ENCODE measurements at regions of chr21 and their contacts with region 1.

Region 1: DNA sequence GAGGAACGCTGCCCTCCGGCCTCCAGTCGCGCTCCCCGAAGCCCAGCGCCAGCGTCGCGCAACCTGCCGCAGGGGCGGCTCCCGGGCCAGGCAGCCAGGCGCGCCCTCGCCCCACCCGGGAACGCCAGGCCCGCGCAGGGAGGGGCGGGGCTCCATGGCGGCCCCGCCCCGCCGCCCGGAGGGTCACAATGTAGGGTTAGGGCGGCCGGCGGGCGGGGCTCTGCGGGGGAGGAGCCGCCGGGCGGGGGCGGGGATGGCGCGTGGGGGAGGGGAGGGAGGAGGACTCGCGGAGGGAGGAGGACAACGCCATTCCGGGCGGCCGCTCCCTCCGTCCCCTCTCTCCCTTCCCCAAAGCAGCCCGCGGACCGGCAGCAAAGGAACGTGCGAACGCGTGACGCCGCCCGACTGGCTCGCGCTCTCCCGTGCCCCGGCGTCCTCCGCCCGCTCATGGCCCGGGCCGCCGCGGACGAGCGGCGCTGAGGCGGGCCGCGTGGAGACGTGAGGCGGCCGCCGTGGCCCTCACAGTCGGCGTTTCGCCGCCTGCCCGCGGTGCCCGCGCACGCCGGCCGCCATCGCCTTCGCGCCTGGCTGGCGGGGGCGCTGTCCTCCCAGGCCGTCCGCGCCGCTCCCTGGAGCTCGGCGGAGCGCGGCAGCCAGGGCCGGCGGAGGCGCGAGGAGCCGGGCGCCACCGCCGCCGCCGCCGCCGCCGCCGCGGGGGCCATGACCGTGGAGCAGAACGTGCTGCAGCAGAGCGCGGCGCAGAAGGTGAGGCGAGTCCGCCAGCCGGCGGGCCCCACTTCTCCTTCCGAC is at the start of gene USP25:
- DNase-seq: peak; percentile 79 to 94 (median 87)
- ATAC-seq: peak; percentile 79
- H3K4me3 ChIP-seq: peak within 1 kb of the TSS; percentile 59 to 68
- H3K4me3 Mint-ChIP-seq: peak within 1 kb of the TSS; percentile 95
- H3K27ac ChIP-seq: peak within 1 kb of the TSS; percentile 69 to 73
- H3K27ac Mint-ChIP-seq: peak within 1 kb of the TSS; percentile 94
- H3K4me1 ChIP-seq: peaks cover 37% of the 10 kb centered on the region
- H3K4me1 Mint-ChIP-seq: peaks cover 41% of the 10 kb centered on the region
- H3K27me3 ChIP-seq: no peaks in the 10 kb centered on the region
- H3K27me3 Mint-ChIP-seq: no peaks in the 10 kb centered on the region
- CTCF ChIP-seq: no peak
- total RNA-seq, gene USP25: 49.8 to 54.7 TPM

Region 2: GRCh38 chr21:14215971-14216641 is 1513.8 kb before region 1 on chr21 and contains the start of gene RBM11:
- CTCF ChIA-PET with region 1: no interaction called
- POLR2A ChIA-PET with region 1: no interaction called
- intact Hi-C with region 1: loop called (anchors 5 kb)
- DNase-seq: peak; percentile 43 to 87 (median 75)
- ATAC-seq: peak; percentile 97
- H3K4me3 ChIP-seq: peak within 1 kb of the TSS; percentile 71 to 89
- H3K4me3 Mint-ChIP-seq: peak within 1 kb of the TSS; percentile 88
- H3K27ac ChIP-seq: peak within 1 kb of the TSS; percentile 54 to 60
- H3K27ac Mint-ChIP-seq: peak within 1 kb of the TSS; percentile 71
- H3K4me1 ChIP-seq: peaks cover 6% of the 10 kb centered on the region
- H3K4me1 Mint-ChIP-seq: peaks cover 11% of the 10 kb centered on the region
- H3K27me3 ChIP-seq: no peaks in the 10 kb centered on the region
- H3K27me3 Mint-ChIP-seq: peaks cover 7% of the 10 kb centered on the region
- CTCF ChIP-seq: no peak
- total RNA-seq, gene RBM11: 12.6 to 15.7 TPM

Region 3: DNA sequence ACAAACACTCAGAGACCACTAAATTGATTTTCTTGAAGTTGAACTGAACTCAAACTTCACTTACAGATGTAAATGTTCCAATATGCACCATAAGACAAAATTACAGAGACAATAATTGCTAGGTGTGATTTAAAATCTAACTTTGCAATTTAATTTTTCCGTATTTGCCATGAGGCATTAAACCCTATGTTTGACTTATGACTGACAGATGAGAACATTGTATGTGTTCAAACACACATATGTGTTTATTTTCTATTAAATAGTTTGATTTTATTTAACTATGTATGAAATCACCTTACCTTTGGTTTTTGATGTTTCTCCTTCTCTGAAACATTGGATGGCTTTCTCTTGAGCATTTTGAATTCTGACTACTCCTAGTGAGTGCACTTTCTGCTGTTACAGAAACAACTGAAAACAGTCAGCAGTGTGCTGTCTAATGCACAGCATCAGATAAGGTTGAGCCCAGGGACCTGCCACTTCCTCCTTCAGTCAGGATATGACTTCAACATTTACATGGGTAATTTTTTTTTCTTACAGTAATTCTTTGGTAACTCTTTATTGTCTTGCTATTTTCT is 1183.9 kb before region 1 on chr21 and contains the start of gene SAMSN1:
- CTCF ChIA-PET with region 1: no interaction called
- POLR2A ChIA-PET with region 1: no interaction called
- intact Hi-C with region 1: loop called (anchors 5 kb)
- DNase-seq: peak; percentile 37 to 88 (median 67)
- ATAC-seq: peak; percentile 90
- H3K4me3 ChIP-seq: peak within 1 kb of the TSS; percentile 53 to 81
- H3K4me3 Mint-ChIP-seq: peak within 1 kb of the TSS; percentile 93
- H3K27ac ChIP-seq: peak within 1 kb of the TSS; percentile 65 to 70
- H3K27ac Mint-ChIP-seq: peak within 1 kb of the TSS; percentile 97
- H3K4me1 ChIP-seq: peaks cover 41% of the 10 kb centered on the region
- H3K4me1 Mint-ChIP-seq: peaks cover 60% of the 10 kb centered on the region
- H3K27me3 ChIP-seq: no peaks in the 10 kb centered on the region
- H3K27me3 Mint-ChIP-seq: no peaks in the 10 kb centered on the region
- CTCF ChIP-seq: no peak
- total RNA-seq, gene SAMSN1: 45.8 to 47.0 TPM

Region 4: DNA sequence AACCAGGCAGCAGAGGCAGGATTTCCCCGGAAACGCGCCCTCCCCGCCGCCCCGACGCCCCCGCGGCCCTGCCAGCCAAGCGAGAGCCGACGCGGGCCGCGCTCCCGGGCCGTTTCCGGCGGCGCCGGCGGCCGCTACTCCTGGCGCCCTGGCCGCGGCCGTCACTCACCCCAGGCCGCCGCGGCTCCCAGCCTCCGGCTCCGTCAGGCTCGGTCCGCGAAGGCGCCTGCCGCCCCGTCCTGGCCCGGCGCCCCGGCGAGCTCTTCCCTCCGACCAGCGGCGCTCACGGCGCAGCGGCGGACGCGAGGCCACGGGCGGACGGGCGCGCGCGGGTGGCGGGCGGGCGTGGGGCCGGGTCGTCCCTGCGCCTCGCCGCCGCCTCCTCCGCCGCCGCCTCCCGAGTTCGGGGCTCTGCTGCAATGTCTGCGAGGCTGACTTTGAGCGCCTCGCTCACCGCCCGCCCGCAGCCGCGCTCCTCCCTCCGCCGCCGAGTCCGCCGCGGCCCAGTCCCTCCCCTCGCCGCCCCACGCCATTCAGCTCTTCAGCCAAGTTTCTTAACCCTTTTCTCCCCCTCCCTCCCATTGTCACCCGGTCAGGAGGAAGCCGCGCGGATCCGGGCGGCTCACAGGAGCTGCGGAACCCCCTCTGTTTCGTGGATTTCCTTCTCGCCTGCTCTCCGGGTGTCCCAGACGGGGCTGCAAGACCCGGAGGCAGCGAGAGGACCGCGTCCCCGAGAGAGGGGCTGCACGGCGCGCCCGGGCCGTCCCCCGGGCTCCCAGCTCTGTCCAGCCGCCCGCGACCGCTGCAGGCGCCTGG is 665.1 kb before region 1 on chr21 and contains the start of gene NRIP1:
- CTCF ChIA-PET with region 1: no interaction called
- POLR2A ChIA-PET with region 1: interaction called, 7 read pairs
- intact Hi-C with region 1: loop called (anchors 2 kb)
- DNase-seq: peak; percentile 66 to 93 (median 85)
- ATAC-seq: peak; percentile 78
- H3K4me3 ChIP-seq: peak within 1 kb of the TSS; percentile 75 to 79
- H3K4me3 Mint-ChIP-seq: peak within 1 kb of the TSS; percentile 97
- H3K27ac ChIP-seq: peak within 1 kb of the TSS; percentile 82 to 83
- H3K27ac Mint-ChIP-seq: peak within 1 kb of the TSS; percentile 98
- H3K4me1 ChIP-seq: peaks cover 29% of the 10 kb centered on the region
- H3K4me1 Mint-ChIP-seq: peaks cover 46% of the 10 kb centered on the region
- H3K27me3 ChIP-seq: no peaks in the 10 kb centered on the region
- H3K27me3 Mint-ChIP-seq: no peaks in the 10 kb centered on the region
- CTCF ChIP-seq: no peak
- total RNA-seq, gene NRIP1: 62.4 to 64.3 TPM

Region 5: DNA sequence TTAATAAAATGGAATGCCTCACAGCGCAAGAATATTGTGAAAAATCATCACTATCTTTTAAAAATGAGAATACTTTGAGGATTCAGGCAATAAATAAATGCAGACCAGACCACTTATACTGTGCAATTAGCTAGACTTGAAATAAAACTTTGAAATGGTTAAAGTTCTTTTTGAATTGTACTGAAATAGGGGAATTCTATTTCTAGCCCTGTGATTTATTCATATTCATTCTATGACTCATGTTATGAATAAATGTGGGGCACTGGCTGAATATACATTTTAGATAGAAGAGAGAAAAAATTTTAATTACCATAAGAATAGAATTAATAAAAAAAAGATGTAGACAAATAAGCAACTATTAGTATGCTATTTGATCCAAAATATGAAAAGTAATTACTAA is 16.5 kb before region 1 on chr21:
- CTCF ChIA-PET with region 1: no interaction called
- POLR2A ChIA-PET with region 1: no interaction called
- intact Hi-C with region 1: no loop called
- DNase-seq: no peak
- ATAC-seq: no peak
- H3K4me3 ChIP-seq: no peak overlapping the region
- H3K4me3 Mint-ChIP-seq: no peak overlapping the region
- H3K27ac ChIP-seq: no peak overlapping the region
- H3K27ac Mint-ChIP-seq: no peak overlapping the region
- H3K4me1 ChIP-seq: no peaks in the 10 kb centered on the region
- H3K4me1 Mint-ChIP-seq: no peaks in the 10 kb centered on the region
- H3K27me3 ChIP-seq: peaks cover 0 to 6% of the 10 kb centered on the region in 2 experiments
- H3K27me3 Mint-ChIP-seq: peaks cover 2% of the 10 kb centered on the region
- CTCF ChIP-seq: no peak

Region 6: DNA sequence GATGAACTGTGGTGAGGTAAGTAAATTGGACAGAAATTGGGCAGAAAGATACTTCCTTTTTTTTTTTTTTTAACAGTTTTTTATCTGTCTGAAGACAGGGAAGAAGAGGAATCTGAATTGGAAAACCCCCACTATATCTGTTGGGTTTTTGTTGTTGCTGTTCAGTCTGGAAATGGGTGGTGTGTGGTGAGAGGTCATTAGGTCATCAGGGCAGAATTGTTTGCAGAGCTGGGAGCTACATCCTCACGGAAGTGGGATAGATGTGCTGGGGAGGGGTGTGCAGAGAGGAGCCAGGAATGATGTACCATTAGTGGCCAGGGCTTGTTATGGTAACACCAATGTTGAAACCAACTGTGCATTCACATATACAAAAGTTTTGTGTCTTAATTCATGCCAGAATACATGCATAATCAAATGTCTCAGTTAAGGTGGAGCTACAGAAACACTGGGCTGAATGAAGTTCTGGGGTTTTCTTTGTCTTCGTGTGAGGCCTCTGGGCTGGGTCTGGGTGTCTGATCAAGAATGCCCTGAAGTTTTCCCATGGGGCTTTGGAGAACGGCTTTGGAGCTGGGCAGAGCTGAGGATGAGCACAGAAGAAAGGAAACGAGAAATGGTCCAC is 12.3 kb after region 1 on chr21:
- CTCF ChIA-PET with region 1: interaction called, 3 read pairs
- POLR2A ChIA-PET with region 1: interaction called, 3 read pairs
- intact Hi-C with region 1: loop called in 1 of 2 experiments (anchors 1 kb)
- DNase-seq: no peak
- ATAC-seq: no peak
- H3K4me3 ChIP-seq: no peak overlapping the region
- H3K4me3 Mint-ChIP-seq: no peak overlapping the region
- H3K27ac ChIP-seq: no peak overlapping the region
- H3K27ac Mint-ChIP-seq: peak overlapping the region; percentile 58
- H3K4me1 ChIP-seq: peaks cover 28% of the 10 kb centered on the region
- H3K4me1 Mint-ChIP-seq: peaks cover 81% of the 10 kb centered on the region
- H3K27me3 ChIP-seq: no peaks in the 10 kb centered on the region
- H3K27me3 Mint-ChIP-seq: no peaks in the 10 kb centered on the region
- CTCF ChIP-seq: no peak

Region 7: GRCh38 chr21:15755125-15755524 is 25.2 kb after region 1 on chr21:
- CTCF ChIA-PET with region 1: no interaction called
- POLR2A ChIA-PET with region 1: no interaction called
- intact Hi-C with region 1: no loop called
- DNase-seq: no peak
- ATAC-seq: no peak
- H3K4me3 ChIP-seq: no peak overlapping the region
- H3K4me3 Mint-ChIP-seq: no peak overlapping the region
- H3K27ac ChIP-seq: no peak overlapping the region
- H3K27ac Mint-ChIP-seq: no peak overlapping the region
- H3K4me1 ChIP-seq: peaks cover 51% of the 10 kb centered on the region
- H3K4me1 Mint-ChIP-seq: peaks cover 86% of the 10 kb centered on the region
- H3K27me3 ChIP-seq: no peaks in the 10 kb centered on the region
- H3K27me3 Mint-ChIP-seq: no peaks in the 10 kb centered on the region
- CTCF ChIP-seq: no peak

Region 8: DNA sequence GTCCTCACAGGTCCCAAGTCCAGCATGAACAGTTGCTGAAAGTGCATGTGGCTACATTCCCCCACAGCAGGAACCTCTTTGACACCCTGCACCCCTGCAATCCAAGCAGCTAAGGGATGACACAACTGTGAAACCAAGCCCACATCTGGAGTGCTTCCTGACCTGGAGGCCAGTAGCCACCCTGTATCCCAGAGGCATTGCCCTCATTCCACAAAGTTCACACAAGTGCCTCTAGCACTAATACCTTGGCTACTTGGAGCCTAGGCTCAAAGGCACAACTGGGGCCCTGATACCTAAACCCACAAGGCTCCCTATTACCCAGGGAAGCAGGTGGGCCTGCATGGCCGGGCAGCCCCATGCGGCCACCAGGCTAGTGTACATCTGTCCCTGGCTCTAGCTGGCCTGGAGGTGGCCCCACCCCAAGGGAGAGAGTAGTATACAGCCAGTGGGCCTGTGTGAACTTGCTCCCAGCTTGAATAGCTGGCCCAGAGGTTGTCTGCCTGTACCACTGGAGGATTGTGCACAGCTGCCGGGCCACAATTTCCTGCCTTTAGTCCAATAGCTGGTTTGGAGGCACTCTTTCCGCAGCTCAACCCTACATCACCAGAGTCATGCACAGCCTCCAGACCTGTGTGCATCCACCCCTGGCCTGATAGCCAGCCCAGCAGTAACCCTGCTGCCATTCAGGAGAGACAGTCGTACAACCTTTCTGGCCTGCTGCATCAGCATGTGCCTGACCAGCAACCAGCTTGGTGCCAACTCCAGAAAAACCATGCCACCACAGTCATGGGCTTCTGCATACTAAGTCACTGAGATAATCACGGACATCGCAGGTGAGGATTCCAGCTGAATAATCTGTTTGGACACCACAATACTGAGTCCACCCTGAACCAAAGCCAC is 52.2 kb after region 1 on chr21:
- CTCF ChIA-PET with region 1: no interaction called
- POLR2A ChIA-PET with region 1: no interaction called
- intact Hi-C with region 1: loop called (anchors 2 to 5 kb)
- DNase-seq: no peak
- ATAC-seq: no peak
- H3K4me3 ChIP-seq: no peak overlapping the region
- H3K4me3 Mint-ChIP-seq: no peak overlapping the region
- H3K27ac ChIP-seq: no peak overlapping the region
- H3K27ac Mint-ChIP-seq: no peak overlapping the region
- H3K4me1 ChIP-seq: no peaks in the 10 kb centered on the region
- H3K4me1 Mint-ChIP-seq: peaks cover 35% of the 10 kb centered on the region
- H3K27me3 ChIP-seq: no peaks in the 10 kb centered on the region
- H3K27me3 Mint-ChIP-seq: no peaks in the 10 kb centered on the region
- CTCF ChIP-seq: no peak

Region 9: DNA sequence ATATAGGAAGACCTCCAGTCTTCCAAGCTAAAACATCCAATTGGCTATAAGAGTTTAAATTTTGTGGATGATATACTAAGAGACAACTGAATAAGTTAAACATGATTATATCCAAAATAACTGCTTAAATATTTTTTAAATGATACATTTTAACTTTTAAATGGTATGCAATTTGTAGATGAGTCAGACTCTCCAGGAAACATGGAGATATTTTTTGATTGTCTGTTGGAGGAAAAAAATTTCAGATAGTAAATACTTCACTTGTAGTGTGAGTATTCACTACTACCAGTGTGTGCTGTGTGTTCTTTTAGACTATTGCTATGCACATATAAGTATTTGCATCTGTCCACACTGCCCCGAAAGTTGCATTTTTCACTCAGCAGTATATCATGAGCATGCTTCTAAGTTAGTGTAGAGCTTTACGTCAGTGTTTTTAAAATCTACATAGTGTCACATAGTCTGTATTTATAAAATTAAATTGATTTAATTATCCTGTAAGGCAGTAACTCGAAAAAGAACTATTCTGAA is 91.0 kb after region 1 on chr21:
- CTCF ChIA-PET with region 1: interaction called, 5 read pairs
- POLR2A ChIA-PET with region 1: interaction called, 11 read pairs
- intact Hi-C with region 1: loop called (anchors 1 to 2 kb)
- DNase-seq: no peak
- ATAC-seq: no peak
- H3K4me3 ChIP-seq: no peak overlapping the region
- H3K4me3 Mint-ChIP-seq: no peak overlapping the region
- H3K27ac ChIP-seq: no peak overlapping the region
- H3K27ac Mint-ChIP-seq: no peak overlapping the region
- H3K4me1 ChIP-seq: peaks cover 26% of the 10 kb centered on the region
- H3K4me1 Mint-ChIP-seq: peaks cover 46% of the 10 kb centered on the region
- H3K27me3 ChIP-seq: no peaks in the 10 kb centered on the region
- H3K27me3 Mint-ChIP-seq: no peaks in the 10 kb centered on the region
- CTCF ChIP-seq: no peak

Measured in CD8-positive, alpha-beta T cell (primary cell).